ENCODE measurements at regions of chr7 and their contacts with region 1.

Region 1: GRCh38 chr7:66221442-66221841 is 16.3 kb downstream of the TPST1 start:
- DNase-seq: no peak
- H3K4me3 ChIP-seq: no peak overlapping the region
- H3K27ac ChIP-seq: no peak overlapping the region
- H3K4me1 ChIP-seq: peaks cover 10% of the 10 kb centered on the region
- H3K27me3 ChIP-seq: no peaks in the 10 kb centered on the region
- CTCF ChIP-seq: no peak

Region 2: DNA sequence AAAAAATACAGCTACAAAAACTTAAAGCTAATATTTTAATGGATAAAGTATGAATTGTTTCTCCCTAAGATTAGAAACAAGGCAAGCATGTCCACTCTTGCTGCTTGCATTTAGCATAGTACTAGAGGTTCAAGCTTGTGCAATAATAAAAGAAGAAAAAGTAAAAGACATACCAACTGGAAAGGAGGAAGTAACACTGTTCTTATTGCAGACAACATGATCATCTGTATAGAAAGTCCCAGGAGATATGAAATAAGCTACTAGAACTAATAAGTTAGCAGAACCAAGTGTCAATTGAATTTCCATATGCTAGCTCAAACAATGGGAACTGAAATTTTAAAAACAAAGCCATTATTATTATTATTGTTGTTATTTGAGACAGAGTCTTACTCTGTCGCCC is 499.1 kb after region 1 on chr7:
- CTCF ChIA-PET with region 1: no interaction called
- dilution Hi-C with region 1: loop called (anchors 10 kb)
- in situ Hi-C with region 1: no loop called
- intact Hi-C with region 1: no loop called
- DNase-seq: no peak
- H3K4me3 ChIP-seq: no peak overlapping the region
- H3K27ac ChIP-seq: no peak overlapping the region
- H3K4me1 ChIP-seq: peaks cover 5% of the 10 kb centered on the region
- H3K27me3 ChIP-seq: no peaks in the 10 kb centered on the region
- CTCF ChIP-seq: no peak

Measured in mammary epithelial cell (primary cell).